HepG2 (cell line): ENCODE measurements at regions of chr12 and their contacts with region 1.

Region 1: DNA sequence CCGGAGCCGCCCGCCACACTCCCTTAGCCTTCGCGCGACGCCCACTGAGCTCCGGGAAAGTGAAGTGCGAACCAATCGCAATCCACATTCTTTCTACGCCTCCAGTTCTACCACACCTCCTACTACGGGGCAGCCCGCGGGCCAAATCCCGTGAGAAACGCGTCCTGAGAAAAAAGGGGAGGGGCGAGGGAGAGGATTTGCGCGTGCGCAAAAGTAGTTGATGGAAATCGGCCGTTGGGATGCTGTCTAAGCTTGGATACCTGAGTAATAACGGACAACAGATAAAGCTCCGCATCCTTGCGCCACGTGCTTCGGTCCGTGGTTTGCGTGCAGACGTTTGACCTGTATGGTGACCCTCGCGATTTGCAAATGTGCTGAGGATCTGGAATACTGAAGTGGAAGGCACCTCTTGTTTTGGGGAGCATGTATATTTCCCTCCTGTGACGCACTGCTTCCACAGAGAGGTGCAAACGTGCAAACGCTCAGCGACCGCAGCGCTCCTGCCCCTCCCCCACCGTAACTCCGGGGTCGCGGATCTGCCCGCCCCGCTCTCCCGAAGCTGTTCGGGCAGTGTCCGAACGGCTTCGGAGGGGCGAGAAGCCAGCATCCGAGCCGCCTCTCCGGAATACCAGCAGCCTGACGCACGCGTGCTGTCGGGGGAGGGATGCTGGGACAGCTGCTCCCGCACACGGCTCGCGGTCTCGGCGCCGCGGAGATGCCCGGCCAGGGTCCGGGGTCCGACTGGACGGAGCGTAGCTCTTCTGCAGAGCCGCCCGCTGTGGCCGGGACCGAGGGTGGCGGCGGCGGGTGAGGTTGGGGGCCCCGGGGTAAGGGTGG is at the starts of genes FAM216A and GPN3:
- DNase-seq: peak; percentile 97
- ATAC-seq: peak; percentile 91
- H3K4me3 ChIP-seq: peak within 1 kb of the TSS; percentile 86 to 92 (median 91)
- H3K27ac ChIP-seq: peak within 1 kb of the TSS; percentile 81
- H3K4me1 ChIP-seq: peaks cover 24% of the 10 kb centered on the region
- H3K27me3 ChIP-seq: peaks cover 0 to 3% of the 10 kb centered on the region in 2 experiments; a peak in 1 of 5 replicates
- CTCF ChIP-seq: 0 out of 2 replicates have a peak, but pooled peaks have one; percentile 1
- EP300 ChIP-seq: peak in 1 of 2 experiments; percentile 50; a peak in 1 of 4 replicates
- POLR2A ChIP-seq: peak; percentile 70 to 91
- RAD21 ChIP-seq: no peak
- total RNA-seq, gene FAM216A: 19.4 and 20.3 TPM in 2 replicates
- total RNA-seq, gene GPN3: 29.5 and 41.4 TPM in 2 replicates

Region 2: GRCh38 chr12:110501752-110502738 is 33.6 kb after region 1 on chr12 and contains the starts of genes RAD9B and VPS29:
- CTCF ChIA-PET with region 1: no interaction called
- POLR2A ChIA-PET with region 1: interaction called, 36 read pairs
- in situ Hi-C with region 1: no loop called
- intact Hi-C with region 1: no loop called
- DNase-seq: peak; percentile 94
- ATAC-seq: peak; percentile 99
- H3K4me3 ChIP-seq: peak within 1 kb of the TSS; percentile 84 to 95 (median 86)
- H3K27ac ChIP-seq: peak within 1 kb of the TSS; percentile 89
- H3K4me1 ChIP-seq: peaks cover 30% of the 10 kb centered on the region
- H3K27me3 ChIP-seq: peaks cover 0 to 3% of the 10 kb centered on the region in 2 experiments; a peak in 1 of 5 replicates
- CTCF ChIP-seq: no peak; the same call in 1 of the 2 replicates
- EP300 ChIP-seq: peak in 1 of 2 experiments; percentile 39; a peak in 1 of 4 replicates
- POLR2A ChIP-seq: peak; percentile 89 to 91
- RAD21 ChIP-seq: no peak
- total RNA-seq, gene RAD9B: 0.38 TPM in 2 replicates
- total RNA-seq, gene VPS29: 107 and 161 TPM in 2 replicates

Region 3: DNA sequence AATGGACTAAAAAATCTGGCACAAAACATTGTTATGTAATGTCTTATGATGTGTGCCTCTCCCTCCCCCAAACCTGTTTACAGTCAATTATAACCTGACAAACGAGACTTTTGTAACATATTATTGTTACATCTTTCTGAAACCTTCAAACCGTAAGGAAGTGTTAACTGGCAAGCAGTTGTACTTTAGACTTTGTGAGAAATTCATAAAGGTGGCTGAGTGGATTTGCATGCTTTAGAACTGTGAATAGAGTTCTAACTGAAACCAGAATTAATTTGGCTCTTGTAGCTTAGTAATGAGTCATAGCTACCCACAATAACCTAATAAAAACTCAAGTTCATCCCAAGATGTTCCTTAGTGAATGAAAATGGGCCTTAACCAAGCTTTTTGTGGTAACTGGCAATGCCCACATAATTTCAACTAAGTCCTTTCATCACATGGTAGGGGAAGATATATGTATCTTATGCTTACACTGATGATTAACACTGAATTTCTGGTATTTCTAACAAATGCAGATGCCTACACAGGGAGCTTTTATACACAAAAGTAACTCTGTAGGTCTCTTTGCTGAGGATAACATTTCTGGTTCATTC is 63.4 kb after region 1 on chr12:
- CTCF ChIA-PET with region 1: no interaction called
- POLR2A ChIA-PET with region 1: no interaction called
- in situ Hi-C with region 1: no loop called
- intact Hi-C with region 1: no loop called
- DNase-seq: no peak
- ATAC-seq: no peak
- H3K4me3 ChIP-seq: no peak overlapping the region
- H3K27ac ChIP-seq: no peak overlapping the region
- H3K4me1 ChIP-seq: peaks cover 17% of the 10 kb centered on the region
- H3K27me3 ChIP-seq: no peaks in the 10 kb centered on the region
- CTCF ChIP-seq: no peak
- EP300 ChIP-seq: no peak
- POLR2A ChIP-seq: no peak
- RAD21 ChIP-seq: no peak

Region 4: DNA sequence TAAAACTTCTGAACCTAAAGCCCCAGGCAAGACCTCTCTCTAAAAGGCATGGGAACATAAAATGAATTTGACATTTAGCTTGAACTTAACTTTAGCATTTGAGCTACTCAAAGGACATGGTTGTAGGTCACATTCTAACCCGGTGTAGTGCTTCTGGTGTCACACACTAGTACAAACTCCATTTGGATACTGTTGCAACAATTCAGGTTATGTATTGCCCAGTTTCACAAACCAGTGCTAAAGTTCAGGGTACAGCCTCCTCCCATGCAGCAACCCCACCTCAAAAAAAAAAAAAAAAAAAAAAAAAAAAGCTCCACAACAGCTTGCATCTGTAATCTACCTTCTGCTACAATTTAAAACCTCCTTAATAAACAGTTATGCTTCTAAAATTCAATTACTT is 106.9 kb after region 1 on chr12:
- CTCF ChIA-PET with region 1: no interaction called
- POLR2A ChIA-PET with region 1: interaction called, 11 read pairs
- in situ Hi-C with region 1: no loop called
- intact Hi-C with region 1: no loop called
- DNase-seq: peak; percentile 97
- ATAC-seq: peak; percentile 95
- H3K4me3 ChIP-seq: peak overlapping the region in 1 of 3 experiments; percentile 40; a peak in 2 of 6 replicates
- H3K27ac ChIP-seq: peak overlapping the region; percentile 73
- H3K4me1 ChIP-seq: peaks cover 63% of the 10 kb centered on the region
- H3K27me3 ChIP-seq: no peaks in the 10 kb centered on the region
- CTCF ChIP-seq: no peak
- EP300 ChIP-seq: peak; percentile 90
- POLR2A ChIP-seq: no peak; a peak in 1 of 4 replicates
- RAD21 ChIP-seq: no peak

Region 5: DNA sequence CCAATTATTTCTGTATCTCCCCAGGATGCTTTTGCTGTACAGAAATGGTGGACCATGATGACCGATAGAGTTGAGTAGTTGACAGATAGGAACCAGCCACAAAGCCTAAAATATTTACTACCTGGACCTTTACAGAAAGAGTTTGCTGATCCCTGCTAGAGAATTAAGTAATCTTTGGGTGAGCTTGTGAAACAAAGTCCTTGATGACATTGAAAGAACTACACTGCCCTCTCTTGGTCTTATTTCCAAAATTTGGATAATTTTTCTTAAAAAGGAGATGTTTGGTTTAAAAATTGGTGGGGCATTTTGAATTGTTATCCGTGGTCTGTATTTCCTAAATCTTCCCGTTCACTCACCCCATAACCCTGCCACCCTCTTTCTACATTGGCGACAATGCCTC is 131.8 kb after region 1 on chr12:
- CTCF ChIA-PET with region 1: interaction called, 12 read pairs
- POLR2A ChIA-PET with region 1: interaction called, 3 read pairs
- in situ Hi-C with region 1: no loop called
- intact Hi-C with region 1: loop called (anchors 1 kb)
- DNase-seq: peak; percentile 70
- ATAC-seq: no peak; the same call in 2 of the 3 replicates
- H3K4me3 ChIP-seq: no peak overlapping the region
- H3K27ac ChIP-seq: no peak overlapping the region
- H3K4me1 ChIP-seq: peaks cover 15% of the 10 kb centered on the region
- H3K27me3 ChIP-seq: no peaks in the 10 kb centered on the region
- CTCF ChIP-seq: peak; percentile 74
- EP300 ChIP-seq: no peak
- POLR2A ChIP-seq: no peak
- RAD21 ChIP-seq: peak; percentile 86

Region 6: DNA sequence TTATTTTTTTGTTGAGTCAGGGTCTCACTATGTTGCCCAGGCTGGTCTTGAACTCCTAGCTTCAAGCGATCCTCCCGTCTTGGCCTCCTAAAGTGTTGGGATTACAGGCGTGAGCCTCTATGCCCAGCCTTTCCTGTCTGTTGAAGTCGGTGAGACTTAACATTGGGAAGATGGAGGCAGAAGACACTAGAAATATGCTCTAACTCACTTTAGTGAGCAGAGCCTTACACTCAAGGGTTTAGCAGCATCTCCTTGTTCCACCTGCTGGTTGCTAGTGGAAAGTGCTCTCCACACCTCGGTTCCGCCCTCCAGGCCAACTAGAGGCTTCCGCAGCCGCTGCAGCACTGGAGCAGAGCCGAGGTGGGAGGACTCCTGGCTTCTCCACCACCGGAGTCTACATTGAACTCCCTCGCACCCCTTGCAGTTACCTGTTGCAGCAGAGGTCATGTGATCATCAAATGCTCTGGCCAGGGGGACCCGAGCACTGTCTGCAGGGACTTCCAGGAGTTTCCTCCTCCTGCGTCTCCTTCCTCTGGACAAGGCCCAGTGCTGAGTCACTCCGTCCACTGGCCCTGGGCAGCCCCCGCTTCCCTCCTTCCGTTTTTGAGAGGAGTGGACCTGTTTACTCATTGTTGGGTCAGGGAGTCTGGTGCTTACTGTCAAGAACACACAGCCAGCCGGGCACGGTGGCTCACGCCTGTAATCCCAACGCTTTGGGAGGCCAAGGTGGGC is 229.9 kb after region 1 on chr12:
- CTCF ChIA-PET with region 1: interaction called, 4 read pairs
- POLR2A ChIA-PET with region 1: no interaction called
- in situ Hi-C with region 1: no loop called
- intact Hi-C with region 1: loop called (anchors 2 kb)
- DNase-seq: peak; percentile 81
- ATAC-seq: peak; percentile 95
- H3K4me3 ChIP-seq: peak overlapping the region; percentile 20 to 74 (median 54); a peak in 5 of 6 replicates
- H3K27ac ChIP-seq: no peak overlapping the region
- H3K4me1 ChIP-seq: peaks cover 24% of the 10 kb centered on the region
- H3K27me3 ChIP-seq: peaks cover 2 to 21% of the 10 kb centered on the region in 2 experiments; a peak in 3 of 5 replicates
- CTCF ChIP-seq: peak; percentile 84
- EP300 ChIP-seq: peak in 1 of 2 experiments; percentile 26; a peak in 1 of 4 replicates
- POLR2A ChIP-seq: 0 out of 4 replicates have a peak, but pooled peaks of 1 of the 2 experiments have one; percentile 22
- RAD21 ChIP-seq: peak; percentile 58; the same call in 1 of the 2 replicates